HAP-1 (cell line): ENCODE measurements at regions of chr11 and their contacts with region 1.

Region 1: DNA sequence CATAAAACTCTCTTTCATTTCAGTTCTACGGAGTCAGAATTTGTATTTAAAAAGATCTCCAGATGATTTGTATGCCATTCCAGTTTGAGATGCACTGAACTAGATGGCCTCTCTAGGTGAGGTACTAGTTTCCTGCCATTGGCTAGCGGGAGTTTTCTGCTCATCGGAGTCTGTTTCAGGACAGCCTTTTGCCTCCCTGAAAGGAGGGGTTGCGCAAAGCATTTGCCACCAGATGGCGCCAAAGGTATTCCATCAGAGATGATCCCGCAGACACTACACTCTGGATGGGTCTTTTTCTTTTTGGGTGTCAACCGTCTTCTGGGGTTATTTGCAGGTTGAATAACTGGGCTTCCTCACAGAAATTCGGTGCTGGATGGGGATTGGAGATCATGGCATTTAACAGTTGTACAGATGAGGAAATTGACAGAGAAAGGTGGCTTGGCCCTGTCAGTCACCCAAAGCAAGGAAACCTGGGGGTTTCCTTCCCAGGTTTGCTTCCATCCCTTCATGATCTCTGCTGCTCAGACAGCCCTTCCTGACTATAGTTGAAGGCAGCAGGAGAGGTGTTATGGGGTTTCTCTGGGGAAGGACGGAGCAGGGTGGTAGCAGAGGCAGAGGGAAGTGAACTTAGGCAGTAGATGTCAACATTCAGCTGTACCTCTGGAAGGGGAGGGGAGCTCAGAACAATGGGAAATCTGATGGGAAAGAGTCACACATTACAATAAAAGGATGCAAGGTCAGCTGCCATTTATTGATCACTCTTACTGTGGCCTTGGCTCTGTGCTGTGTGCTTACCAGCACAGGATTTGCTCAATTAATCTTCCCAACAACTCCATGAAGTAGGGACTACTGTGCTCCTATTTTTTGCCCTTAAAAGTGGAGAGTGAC is 81.6 kb downstream of the CCDC81 start:
- DNase-seq: peak; percentile 70 to 92
- H3K4me3 ChIP-seq: no peak overlapping the region
- H3K4me1 ChIP-seq: no peaks in the 10 kb centered on the region
- H3K27me3 ChIP-seq: no peaks in the 10 kb centered on the region

Region 2: GRCh38 chr11:86818466-86819192 is 362.3 kb after region 1 on chr11:
- in situ Hi-C with region 1: loop called (anchors 5 kb)
- DNase-seq: peak; percentile 17 to 71
- H3K4me3 ChIP-seq: no peak overlapping the region
- H3K4me1 ChIP-seq: no peaks in the 10 kb centered on the region
- H3K27me3 ChIP-seq: peaks cover 12% of the 10 kb centered on the region; the same call in 1 of the 2 replicates

Region 3: DNA sequence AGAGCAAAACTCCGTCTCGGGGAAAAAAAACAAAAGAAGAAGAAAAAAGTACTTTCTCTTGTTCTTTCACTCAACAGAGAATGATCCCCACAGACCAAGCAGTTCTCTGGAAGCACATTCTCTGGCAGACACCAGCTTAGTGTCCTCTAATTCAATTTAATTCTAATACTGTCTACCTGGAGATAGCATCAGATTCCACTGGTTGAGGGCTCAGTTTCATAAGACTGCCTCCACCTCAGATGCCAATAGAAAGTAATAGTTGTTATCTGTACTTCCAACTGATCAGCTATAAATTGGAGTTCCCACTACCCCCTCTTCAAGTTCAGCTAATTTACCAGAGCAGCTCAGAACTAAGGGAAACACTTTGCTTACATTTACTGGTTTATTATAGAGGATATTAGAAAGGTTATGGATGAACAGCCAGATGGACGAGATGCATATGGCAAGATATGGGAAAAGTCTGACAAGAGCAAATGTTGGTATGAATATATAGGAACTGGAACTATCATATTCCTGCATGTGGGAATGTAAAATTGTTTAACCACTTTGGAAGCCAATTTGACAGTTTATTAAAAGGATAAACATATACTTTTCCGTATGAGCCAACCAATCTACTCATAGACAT is 645.8 kb after region 1 on chr11:
- in situ Hi-C with region 1: no loop called
- DNase-seq: no peak
- H3K4me3 ChIP-seq: no peak overlapping the region
- H3K4me1 ChIP-seq: no peaks in the 10 kb centered on the region
- H3K27me3 ChIP-seq: no peaks in the 10 kb centered on the region